GM10248 (cell line): ENCODE measurements at regions of chr17 and their contacts with region 1.

Region 1: GRCh38 chr17:4156750-4157381 is 13.9 kb downstream of the CYB5D2 start:
- DNase-seq: no peak
- CTCF ChIP-seq: peak; percentile 1

Region 2: GRCh38 chr17:4118015-4118743 is 38.7 kb before region 1 on chr17:
- CTCF ChIA-PET with region 1: no interaction called
- POLR2A ChIA-PET with region 1: no interaction called
- DNase-seq: no peak
- CTCF ChIP-seq: no peak

Region 3: DNA sequence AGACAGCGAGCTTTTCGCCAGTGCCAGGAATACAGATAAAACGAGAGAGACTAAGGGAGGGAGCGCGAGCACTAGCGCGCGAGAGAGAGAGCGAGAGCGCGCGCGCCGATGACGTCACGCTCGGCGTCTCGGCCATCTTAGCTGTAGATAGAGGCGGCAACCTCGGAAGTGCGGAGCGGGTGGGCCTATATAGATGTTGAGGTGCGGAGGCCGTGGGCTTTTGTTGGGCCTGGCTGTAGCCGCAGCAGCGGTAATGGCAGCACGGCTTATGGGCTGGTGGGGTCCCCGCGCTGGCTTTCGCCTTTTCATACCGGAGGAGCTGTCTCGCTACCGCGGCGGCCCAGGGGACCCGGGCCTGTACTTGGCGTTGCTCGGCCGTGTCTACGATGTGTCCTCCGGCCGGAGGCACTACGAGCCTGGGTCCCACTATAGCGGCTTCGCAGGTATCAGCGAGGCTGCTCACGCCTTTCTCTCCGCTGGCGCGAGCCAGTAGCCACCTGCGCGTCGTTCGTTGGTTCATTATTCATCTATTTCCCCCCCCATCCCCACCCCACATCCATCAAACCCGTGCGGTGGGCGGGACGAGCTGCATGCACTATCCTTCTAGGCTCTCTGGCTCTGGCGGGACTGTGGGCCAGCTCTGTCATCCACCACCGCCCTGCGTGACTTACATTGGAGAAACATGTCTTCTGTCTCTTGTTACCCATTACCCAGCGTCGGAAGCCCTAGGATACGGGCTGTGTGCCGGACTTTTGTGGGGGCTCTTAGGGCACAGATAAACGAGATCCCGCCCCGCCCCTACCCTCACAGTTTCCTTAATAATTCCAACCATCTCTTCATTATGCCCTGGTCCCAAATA is 13.1 kb before region 1 on chr17:
- CTCF ChIA-PET with region 1: interaction called, 19 read pairs
- POLR2A ChIA-PET with region 1: no interaction called
- DNase-seq: peak; percentile 91
- CTCF ChIP-seq: no peak